Activated naive CD4-positive, alpha-beta T cell treated with anti-CD3 and anti-CD28 coated beads for 36 hours (primary cell): ENCODE measurements at regions of chr11 and their contacts with region 1.

Region 1: GRCh38 chr11:110429731-110430266 is at the start of gene FDX1:
- DNase-seq: peak; percentile 86
- H3K4me3 Mint-ChIP-seq: peak within 1 kb of the TSS; percentile 98
- H3K27ac Mint-ChIP-seq: peak within 1 kb of the TSS; percentile 93
- H3K4me1 Mint-ChIP-seq: peaks cover 40% of the 10 kb centered on the region
- H3K27me3 Mint-ChIP-seq: no peaks in the 10 kb centered on the region
- total RNA-seq, gene FDX1: 12.3 to 13.4 TPM

Region 2: GRCh38 chr11:110092515-110093404 is 337.0 kb before region 1 on chr11 and contains the start of gene ZC3H12C:
- CTCF ChIA-PET with region 1: no interaction called
- intact Hi-C with region 1: loop called (anchors 5 kb)
- DNase-seq: peak; percentile 73
- H3K4me3 Mint-ChIP-seq: peak within 1 kb of the TSS; percentile 78
- H3K27ac Mint-ChIP-seq: no peak within 1 kb of the TSS
- H3K4me1 Mint-ChIP-seq: peaks cover 11% of the 10 kb centered on the region
- H3K27me3 Mint-ChIP-seq: peaks cover 49% of the 10 kb centered on the region
- total RNA-seq, gene ZC3H12C: not detected

Region 3: DNA sequence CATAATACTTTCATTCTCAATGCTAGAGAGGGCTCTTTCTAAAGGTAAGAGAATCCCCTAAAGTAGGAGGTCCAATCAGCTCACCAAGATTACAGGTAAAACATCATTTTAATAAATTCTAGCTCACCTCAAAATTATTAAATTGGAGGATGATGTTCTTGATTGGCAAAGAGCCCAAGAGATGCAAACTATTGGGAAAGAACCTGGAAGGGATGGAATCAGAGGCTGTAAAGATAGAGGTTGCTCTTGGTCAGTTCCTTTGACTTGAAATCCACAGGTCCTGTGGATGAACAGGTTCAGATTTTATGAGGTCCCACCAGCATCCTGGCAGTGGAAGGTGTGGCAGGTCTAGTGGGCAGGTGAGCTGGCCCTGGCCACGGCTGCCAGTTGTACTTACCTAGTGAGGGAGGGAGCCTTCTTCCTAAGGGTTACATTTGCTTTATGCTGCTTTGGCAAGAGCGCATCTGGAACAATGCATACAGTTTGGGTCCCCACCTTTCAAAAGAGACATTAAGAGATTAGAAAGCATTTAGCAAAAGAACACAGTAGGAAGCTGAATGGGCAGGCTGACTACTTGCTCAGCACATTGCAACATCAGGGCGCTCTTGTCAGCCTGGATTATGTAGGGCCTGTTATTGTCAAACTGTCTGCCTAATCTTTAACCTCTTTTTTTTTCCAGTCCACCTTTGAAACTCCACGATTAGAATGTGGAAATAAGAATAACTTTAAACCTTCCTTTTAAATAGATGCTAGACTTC is 230.4 kb before region 1 on chr11:
- CTCF ChIA-PET with region 1: interaction called, 19 read pairs
- intact Hi-C with region 1: loop called (anchors 1 kb)
- DNase-seq: no peak
- H3K4me3 Mint-ChIP-seq: no peak overlapping the region
- H3K27ac Mint-ChIP-seq: no peak overlapping the region
- H3K4me1 Mint-ChIP-seq: no peaks in the 10 kb centered on the region
- H3K27me3 Mint-ChIP-seq: no peaks in the 10 kb centered on the region

Region 4: GRCh38 chr11:110305169-110306018 is 124.4 kb before region 1 on chr11:
- CTCF ChIA-PET with region 1: no interaction called
- intact Hi-C with region 1: no loop called
- DNase-seq: no peak
- H3K4me3 Mint-ChIP-seq: no peak overlapping the region
- H3K27ac Mint-ChIP-seq: no peak overlapping the region
- H3K4me1 Mint-ChIP-seq: no peaks in the 10 kb centered on the region
- H3K27me3 Mint-ChIP-seq: no peaks in the 10 kb centered on the region

Region 5: DNA sequence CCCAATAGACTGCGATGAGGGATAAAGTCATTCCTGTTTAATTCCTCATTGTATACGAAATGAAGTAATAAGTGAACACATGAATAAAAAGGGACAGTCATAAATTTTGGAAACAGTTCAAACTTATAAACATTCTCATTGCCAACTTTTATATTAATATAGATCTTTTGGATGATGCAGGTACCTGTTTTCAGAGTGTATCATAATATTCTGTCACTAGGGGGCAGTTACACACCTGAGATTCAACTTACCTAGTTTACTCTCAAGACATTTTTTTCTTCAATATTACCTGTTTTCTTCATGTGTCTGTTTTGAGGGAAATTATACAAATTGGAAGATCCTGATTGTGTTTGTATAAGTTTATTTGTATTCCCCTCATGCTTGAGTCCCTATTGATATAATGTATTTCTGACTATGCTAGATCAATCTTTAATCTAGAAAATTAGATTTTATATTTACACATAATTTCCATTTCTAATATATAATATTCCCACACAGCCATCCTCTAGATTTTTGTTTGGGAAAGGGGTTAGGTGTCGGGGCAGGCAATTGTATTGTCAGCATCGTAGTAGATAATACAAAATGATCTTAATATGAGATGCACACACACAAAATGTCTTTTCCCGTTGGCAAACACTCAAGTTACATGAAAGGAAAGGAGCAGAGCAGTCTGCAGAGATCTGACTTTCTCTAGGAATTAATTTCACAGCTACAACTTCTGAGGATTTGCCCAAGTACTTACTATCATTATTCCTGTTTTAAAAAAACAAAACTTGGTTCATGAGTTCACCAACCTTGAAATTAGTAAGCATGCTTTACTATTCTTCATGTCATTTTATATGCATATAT is 18.3 kb after region 1 on chr11:
- CTCF ChIA-PET with region 1: interaction called, 14 read pairs
- intact Hi-C with region 1: no loop called
- DNase-seq: no peak
- H3K4me3 Mint-ChIP-seq: no peak overlapping the region
- H3K27ac Mint-ChIP-seq: no peak overlapping the region
- H3K4me1 Mint-ChIP-seq: peaks cover 20% of the 10 kb centered on the region
- H3K27me3 Mint-ChIP-seq: no peaks in the 10 kb centered on the region